ENCODE measurements at regions of chr4 and their contacts with region 1.

Region 1: DNA sequence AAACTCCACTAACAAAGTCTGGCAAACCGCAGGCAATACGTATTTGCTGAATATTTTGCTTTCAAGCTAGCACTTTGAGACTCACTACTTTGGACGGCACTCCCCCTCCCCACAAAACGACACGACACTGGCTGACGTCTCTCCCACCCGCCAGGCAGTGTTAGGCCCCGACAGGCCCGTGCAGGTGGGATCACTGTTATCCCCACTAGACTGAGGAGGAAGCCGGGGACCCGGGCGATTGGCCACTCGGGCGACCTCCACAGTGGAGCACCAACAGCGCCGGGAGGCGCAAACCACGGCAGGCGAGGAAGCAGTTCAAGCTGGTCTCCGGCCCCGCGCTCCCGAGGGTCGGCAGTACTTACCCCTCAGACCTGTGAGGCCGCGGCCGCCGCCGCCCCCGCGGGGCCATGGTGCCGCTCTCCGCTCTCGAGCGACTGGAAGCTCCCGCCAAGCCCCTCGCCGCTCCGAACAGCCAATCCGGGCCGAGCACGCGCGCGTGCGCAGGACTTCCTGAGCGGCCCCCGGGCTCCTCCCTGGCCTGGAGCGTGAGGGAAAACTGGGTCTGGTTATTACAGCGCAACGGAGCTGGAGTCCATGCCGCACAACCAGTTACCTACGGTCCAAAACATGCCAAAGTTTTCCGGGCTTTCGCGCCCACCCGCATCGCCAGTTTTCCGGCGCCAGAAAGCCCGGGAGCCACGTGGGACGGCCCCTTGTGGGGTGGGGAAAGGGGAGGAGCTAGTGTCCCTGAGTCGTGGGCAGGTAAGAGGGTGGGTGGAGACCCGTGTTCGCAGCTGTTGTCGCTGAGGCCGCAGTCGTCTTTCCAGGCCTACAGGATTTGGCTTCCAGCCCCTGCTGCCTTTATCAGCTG is at the start of gene CENPU:
- DNase-seq: peak; percentile 96
- ATAC-seq: peak; percentile 93
- H3K4me3 Mint-ChIP-seq: peak within 1 kb of the TSS; percentile 98
- H3K27ac Mint-ChIP-seq: peak within 1 kb of the TSS; percentile 95
- H3K4me1 Mint-ChIP-seq: peaks cover 46% of the 10 kb centered on the region
- H3K27me3 Mint-ChIP-seq: no peaks in the 10 kb centered on the region
- total RNA-seq, gene CENPU: 58.7 to 59.1 TPM

Region 2: GRCh38 chr4:184649026-184649970 is 84.6 kb before region 1 on chr4 and contains the starts of genes CASP3 and PRIMPOL:
- CTCF ChIA-PET with region 1: interaction called, 7 read pairs
- POLR2A ChIA-PET with region 1: interaction called, 29 read pairs
- DNase-seq: peak; percentile 96
- ATAC-seq: peak; percentile 92
- H3K4me3 Mint-ChIP-seq: peak within 1 kb of the TSS; percentile 89
- H3K27ac Mint-ChIP-seq: peak within 1 kb of the TSS; percentile 88
- H3K4me1 Mint-ChIP-seq: peaks cover 51% of the 10 kb centered on the region
- H3K27me3 Mint-ChIP-seq: no peaks in the 10 kb centered on the region
- total RNA-seq, gene CASP3: 71.7 to 78.0 TPM
- total RNA-seq, gene PRIMPOL: 24.9 to 26.9 TPM

Region 3: DNA sequence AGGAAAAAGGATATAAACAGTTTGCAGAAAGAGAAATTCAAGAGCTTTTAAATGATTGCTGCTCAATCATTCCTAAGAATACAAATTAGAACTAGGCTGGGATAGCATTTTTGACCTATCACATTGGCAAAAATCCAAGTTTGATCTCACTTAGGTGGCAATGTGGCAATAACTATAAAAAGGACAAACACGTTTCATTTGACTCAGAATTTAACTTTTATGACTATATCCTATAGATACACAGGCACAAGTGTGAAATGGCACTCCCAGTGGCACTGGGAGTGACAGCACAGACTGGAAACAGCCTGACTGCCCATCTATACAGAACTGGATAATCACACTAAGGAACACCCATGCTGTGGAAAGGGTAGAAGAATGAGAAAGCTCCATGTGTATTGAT is 11.1 kb before region 1 on chr4:
- CTCF ChIA-PET with region 1: interaction called, 8 read pairs
- POLR2A ChIA-PET with region 1: interaction called, 20 read pairs
- DNase-seq: no peak
- ATAC-seq: no peak
- H3K4me3 Mint-ChIP-seq: no peak overlapping the region
- H3K27ac Mint-ChIP-seq: no peak overlapping the region
- H3K4me1 Mint-ChIP-seq: peaks cover 27% of the 10 kb centered on the region
- H3K27me3 Mint-ChIP-seq: no peaks in the 10 kb centered on the region

Region 4: DNA sequence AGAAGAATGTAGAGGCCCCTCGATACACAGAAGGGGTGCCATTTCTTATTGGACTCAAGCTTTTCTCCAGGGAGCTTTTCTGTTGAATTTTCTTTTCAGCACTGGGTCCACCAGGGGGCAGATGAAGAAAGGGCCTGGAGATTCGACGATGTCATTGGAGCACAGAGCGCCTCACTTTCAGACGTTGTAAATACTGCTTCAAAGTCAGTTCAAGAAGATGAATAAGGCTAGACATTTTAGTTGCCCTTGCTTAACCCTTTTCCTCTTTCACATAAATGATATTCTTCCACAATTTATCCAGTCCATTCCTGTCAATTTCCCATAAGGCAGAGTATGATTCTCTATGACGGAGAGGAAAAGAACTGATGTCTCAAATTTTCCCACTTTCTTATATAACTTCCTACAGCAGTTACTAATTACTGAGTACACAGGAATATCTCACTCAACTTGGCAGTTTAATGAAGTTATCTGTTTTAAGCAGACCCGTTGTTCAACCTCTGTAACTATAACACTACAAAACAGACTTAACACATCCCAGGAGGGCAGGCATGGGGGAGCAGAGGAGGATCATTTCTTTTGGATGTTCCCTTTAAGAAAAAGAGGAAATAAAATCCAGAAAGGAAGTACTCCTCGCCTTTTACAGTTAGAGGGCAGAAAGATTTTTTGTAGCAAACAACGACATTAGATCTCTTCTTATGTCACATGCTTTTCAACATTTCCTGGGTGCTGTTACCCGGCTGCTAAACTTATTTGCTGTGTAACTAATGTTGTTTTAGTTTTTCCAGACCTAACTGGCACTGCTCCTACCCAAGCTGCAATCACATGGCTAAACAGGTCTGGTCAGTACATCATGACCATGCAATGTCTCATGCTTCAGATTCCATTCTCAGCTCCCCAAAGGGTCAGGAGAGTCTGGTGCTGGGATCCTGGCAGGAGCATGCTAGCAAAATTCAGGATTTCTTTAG is 12.2 kb after region 1 on chr4:
- CTCF ChIA-PET with region 1: interaction called, 20 read pairs
- POLR2A ChIA-PET with region 1: interaction called, 8 read pairs
- DNase-seq: peak; percentile 84
- ATAC-seq: peak; percentile 82
- H3K4me3 Mint-ChIP-seq: no peak overlapping the region
- H3K27ac Mint-ChIP-seq: no peak overlapping the region
- H3K4me1 Mint-ChIP-seq: peaks cover 11% of the 10 kb centered on the region
- H3K27me3 Mint-ChIP-seq: peaks cover 5% of the 10 kb centered on the region

Region 5: DNA sequence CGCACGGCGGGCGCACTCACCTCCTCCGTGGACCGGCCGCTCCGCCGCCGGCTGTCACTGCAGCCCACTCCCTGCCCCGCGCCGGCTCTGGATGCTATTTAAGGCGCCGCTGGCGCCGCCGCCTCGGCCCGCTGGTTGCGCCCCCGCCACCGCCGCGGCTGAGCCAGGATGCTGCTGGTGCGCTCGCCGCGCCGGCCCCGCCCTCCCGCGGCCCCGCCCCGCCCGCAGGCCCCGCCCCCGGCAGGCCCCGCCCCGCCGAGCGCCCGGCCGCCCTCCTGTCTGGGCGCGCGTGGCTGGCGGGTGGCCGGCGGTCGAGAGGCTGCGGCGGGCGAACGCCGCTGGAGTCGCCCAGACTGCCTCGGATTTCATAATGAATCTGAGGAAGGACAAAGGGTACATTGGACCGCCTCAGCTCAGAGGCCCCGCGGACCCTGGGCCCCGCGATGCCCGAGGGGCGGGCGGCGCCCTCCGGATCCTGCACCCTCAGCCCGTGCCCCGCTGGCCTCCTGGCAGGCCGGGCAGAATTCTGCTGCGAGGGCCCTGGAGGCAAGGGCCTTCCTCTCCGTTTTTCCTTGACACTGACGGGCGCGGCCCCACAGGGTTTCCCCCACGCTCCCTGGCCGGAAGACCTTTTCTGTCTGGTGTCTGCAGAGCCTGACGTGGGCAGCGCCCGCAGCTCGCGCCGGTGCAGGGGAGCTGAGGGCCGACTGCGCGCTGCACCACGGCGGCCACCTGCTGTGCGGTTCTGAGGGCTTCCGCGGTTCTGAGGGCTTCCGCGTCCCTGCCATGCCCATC is 92.2 kb after region 1 on chr4 and contains the start of gene ACSL1:
- CTCF ChIA-PET with region 1: interaction called, 6 read pairs
- POLR2A ChIA-PET with region 1: interaction called, 15 read pairs
- DNase-seq: peak; percentile 79
- ATAC-seq: peak; percentile 82
- H3K4me3 Mint-ChIP-seq: peak within 1 kb of the TSS; percentile 87
- H3K27ac Mint-ChIP-seq: peak within 1 kb of the TSS; percentile 87
- H3K4me1 Mint-ChIP-seq: peaks cover 39% of the 10 kb centered on the region
- H3K27me3 Mint-ChIP-seq: peaks cover 27% of the 10 kb centered on the region
- total RNA-seq, gene ACSL1: 7.5 to 8.7 TPM

Measured in activated CD8-positive, alpha-beta T cell treated with anti-CD3 and anti-CD28 coated beads, Interleukin-2, amount 10 ng/mL, durations not matched to agents 7 days and 5 days (primary cell).